Activated CD8-positive, alpha-beta memory T cell treated with anti-CD3 and anti-CD28 coated beads, Interleukin-2, amount 10 ng/mL, durations not matched to agents 7 days and 5 days (primary cell): ENCODE measurements at regions of chr16 and their contacts with region 1.

Region 1: GRCh38 chr16:67240506-67240905 is 6.8 kb downstream of the FHOD1 start:
- DNase-seq: no peak
- ATAC-seq: no peak
- H3K4me3 Mint-ChIP-seq: no peak overlapping the region
- H3K27ac Mint-ChIP-seq: peak overlapping the region; percentile 15
- H3K4me1 Mint-ChIP-seq: peaks cover 42% of the 10 kb centered on the region
- H3K27me3 Mint-ChIP-seq: no peaks in the 10 kb centered on the region

Region 2: GRCh38 chr16:67226804-67227557 is 13.5 kb before region 1 on chr16 and contains the start of gene TMEM208:
- CTCF ChIA-PET with region 1: interaction called, 41 read pairs
- DNase-seq: peak; percentile 100
- ATAC-seq: peak; percentile 98
- H3K4me3 Mint-ChIP-seq: peak within 1 kb of the TSS; percentile 98
- H3K27ac Mint-ChIP-seq: peak within 1 kb of the TSS; percentile 96
- H3K4me1 Mint-ChIP-seq: peaks cover 50% of the 10 kb centered on the region
- H3K27me3 Mint-ChIP-seq: no peaks in the 10 kb centered on the region
- total RNA-seq, gene TMEM208: 32.3 to 39.7 TPM

Region 3: DNA sequence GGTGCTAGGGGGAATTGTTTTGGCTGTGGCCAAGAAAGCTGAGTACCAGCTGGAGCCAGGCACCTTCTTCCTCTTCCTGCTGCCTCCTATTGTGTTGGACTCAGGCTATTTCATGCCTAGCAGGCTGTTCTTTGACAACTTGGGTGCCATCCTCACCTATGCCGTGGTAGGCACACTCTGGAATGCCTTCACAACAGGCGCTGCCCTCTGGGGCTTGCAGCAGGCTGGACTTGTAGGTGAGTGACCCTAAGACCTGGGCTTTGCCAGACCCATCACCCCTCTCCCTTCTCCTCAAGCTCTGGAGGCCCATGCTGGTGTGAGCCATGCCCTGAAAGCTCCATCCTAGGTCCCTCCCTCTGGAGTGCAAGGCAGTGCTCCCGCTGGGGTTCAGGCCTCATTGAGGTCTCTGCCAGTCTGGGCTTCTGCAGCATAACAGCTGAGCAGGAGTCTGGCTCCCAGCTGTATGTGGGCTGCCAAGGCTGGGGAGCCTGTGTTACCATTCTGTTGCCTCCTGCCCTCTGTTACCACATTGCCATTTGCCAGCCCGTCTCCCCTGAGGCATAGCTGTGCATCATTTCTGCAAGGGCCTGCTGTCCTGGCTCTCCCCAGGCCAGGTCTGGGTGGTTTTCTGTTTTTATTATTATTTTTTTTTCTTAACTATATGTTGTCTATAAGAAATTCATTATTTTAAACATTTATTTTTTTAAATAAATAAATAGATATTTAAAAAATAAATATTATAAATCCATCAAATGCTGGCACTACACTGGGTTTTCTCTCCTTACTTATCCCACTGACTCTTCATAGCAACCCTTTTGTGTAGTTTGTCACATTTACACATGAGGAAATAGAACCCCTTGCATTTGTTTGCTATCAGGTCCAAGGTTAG is 12.3 kb after region 1 on chr16:
- CTCF ChIA-PET with region 1: no interaction called
- DNase-seq: no peak
- ATAC-seq: no peak
- H3K4me3 Mint-ChIP-seq: no peak overlapping the region
- H3K27ac Mint-ChIP-seq: no peak overlapping the region
- H3K4me1 Mint-ChIP-seq: peaks cover 15% of the 10 kb centered on the region
- H3K27me3 Mint-ChIP-seq: peaks cover 12% of the 10 kb centered on the region

Region 4: DNA sequence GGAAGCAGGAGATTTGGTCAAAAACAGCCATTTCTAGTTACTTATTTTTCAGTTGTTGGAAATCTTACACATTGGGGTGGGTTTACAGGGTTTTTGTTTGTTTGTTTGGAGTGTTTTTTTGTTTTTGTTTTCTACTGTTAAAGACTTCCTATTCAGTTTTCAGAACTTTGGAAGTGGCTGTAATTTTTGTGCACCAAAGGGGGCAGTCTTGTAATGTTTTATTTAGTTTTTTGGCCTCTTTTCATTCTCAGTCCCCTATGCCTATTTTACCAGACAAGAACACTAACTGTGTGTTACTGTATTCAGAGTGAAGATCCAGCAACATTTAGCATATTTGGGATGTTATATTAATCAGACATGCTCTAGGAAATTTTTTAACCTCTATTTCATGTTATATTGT is 132.2 kb after region 1 on chr16:
- CTCF ChIA-PET with region 1: no interaction called
- DNase-seq: no peak
- ATAC-seq: no peak
- H3K4me3 Mint-ChIP-seq: no peak overlapping the region
- H3K27ac Mint-ChIP-seq: no peak overlapping the region
- H3K4me1 Mint-ChIP-seq: no peaks in the 10 kb centered on the region
- H3K27me3 Mint-ChIP-seq: peaks cover 6% of the 10 kb centered on the region